IMR-90 (cell line): ENCODE measurements at regions of chr15 and their contacts with region 1.

Region 1: DNA sequence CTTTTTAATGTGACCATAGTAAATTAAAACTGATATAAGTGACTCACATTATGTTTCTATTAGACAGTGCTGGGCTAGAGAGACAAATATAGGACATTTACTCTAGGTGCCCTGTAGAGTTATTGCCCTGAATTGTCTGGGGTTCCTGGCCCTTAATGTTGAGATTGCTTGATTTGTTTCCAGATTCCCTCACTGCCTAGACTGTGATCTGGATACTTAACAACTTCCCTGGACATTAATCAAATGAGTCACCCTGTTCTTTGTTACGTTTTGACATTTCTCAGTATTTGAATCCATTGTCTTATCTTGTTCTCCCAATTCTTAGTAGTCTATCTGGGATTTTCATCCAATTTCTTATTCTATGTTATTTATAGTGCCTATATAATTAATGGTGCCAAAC is 65.8 kb downstream of the DTWD1 start:
- DNase-seq: peak; percentile 32
- ATAC-seq: no peak
- H3K4me3 ChIP-seq: no peak overlapping the region
- H3K27ac ChIP-seq: no peak overlapping the region
- H3K4me1 ChIP-seq: peaks cover 2% of the 10 kb centered on the region; the same call in 1 of the 2 replicates
- H3K27me3 ChIP-seq: no peaks in the 10 kb centered on the region
- CTCF ChIP-seq: no peak
- POLR2A ChIP-seq: no peak
- RAD21 ChIP-seq: no peak

Region 2: DNA sequence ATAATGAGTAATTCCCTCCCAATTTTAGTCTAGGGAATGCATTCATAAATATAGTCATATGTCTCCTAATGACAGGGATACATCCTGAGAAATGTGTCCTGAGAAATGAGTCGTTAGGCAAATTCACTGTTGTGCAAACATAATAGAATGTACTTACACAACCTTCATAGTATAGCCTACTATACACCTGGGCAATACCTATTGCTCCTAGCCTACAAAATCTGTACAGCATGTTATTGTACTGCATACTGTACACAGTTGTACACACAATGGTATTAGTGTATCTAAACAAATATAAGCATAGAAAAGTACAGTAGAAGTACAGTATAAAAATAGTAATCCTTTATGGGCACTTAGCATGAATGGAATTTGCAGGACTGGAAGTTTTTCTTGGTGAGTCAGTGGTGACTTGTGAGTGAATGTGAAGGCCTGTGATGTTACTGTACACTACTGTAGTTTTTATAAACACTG is 59.2 kb before region 1 on chr15:
- CTCF ChIA-PET with region 1: no interaction called
- POLR2A ChIA-PET with region 1: no interaction called
- dilution Hi-C with region 1: no loop called
- in situ Hi-C with region 1: no loop called
- intact Hi-C with region 1: loop called (anchors 5 kb)
- DNase-seq: peak; percentile 96
- ATAC-seq: peak; percentile 93
- H3K4me3 ChIP-seq: no peak overlapping the region
- H3K27ac ChIP-seq: peak overlapping the region; percentile 28; the same call in 1 of the 2 replicates
- H3K4me1 ChIP-seq: peaks cover 7% of the 10 kb centered on the region
- H3K27me3 ChIP-seq: no peaks in the 10 kb centered on the region
- CTCF ChIP-seq: no peak
- POLR2A ChIP-seq: no peak
- RAD21 ChIP-seq: no peak

Region 3: DNA sequence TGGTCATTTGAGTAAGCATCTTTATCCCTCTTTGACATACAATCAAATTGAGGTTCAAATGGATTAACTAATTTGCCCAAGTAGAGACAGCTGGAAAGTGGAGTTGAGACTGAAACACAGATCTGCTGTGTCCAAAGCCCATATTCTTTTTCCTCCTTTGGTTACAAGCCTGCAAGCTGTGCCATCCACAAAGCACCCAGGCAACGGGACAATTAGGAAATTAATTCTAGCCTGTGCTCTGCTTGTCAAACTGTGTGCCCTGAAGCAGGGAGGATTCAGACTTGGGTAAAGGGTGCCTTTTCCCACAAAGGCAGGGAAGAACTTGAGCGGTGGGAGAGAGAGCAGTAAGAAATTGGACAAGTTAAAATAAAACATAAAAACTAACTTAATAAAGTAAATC is 62.2 kb after region 1 on chr15:
- CTCF ChIA-PET with region 1: no interaction called
- POLR2A ChIA-PET with region 1: no interaction called
- dilution Hi-C with region 1: no loop called
- in situ Hi-C with region 1: no loop called
- intact Hi-C with region 1: no loop called
- DNase-seq: no peak
- ATAC-seq: no peak
- H3K4me3 ChIP-seq: no peak overlapping the region
- H3K27ac ChIP-seq: no peak overlapping the region
- H3K4me1 ChIP-seq: no peaks in the 10 kb centered on the region
- H3K27me3 ChIP-seq: no peaks in the 10 kb centered on the region
- CTCF ChIP-seq: no peak
- POLR2A ChIP-seq: no peak
- RAD21 ChIP-seq: no peak